Heart left ventricle (tissue), 16 donors: ENCODE measurements at regions of chr13 and their contacts with region 1.

Region 1: DNA sequence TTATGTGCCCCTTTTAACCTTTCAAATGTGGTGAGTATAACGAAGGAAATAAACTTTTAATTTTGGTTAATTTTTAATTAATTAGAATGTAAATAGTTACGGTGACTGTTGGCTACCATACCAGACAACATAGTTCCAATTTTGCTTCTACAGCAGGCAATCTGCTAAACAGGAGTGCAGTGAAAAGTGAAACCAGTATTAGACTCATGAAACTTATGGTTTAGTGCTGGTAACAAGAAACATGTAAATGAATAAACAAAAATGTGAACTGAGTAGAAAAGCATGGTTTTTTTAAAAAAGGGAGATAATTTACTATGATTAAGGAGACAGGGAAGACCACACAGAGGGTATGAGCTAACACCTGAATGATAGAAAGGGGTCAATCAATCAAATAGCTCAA is 478.4 kb downstream of the PCDH9 start:
- DNase-seq: no peak
- ATAC-seq: no peak
- H3K4me3 ChIP-seq: peak overlapping the region in 2 of 12 donors; percentile 4 to 15
- H3K27ac ChIP-seq: no peak overlapping the region
- H3K4me1 ChIP-seq: no peaks in the 10 kb centered on the region
- H3K27me3 ChIP-seq: no peaks in the 10 kb centered on the region
- CTCF ChIP-seq: no peak
- POLR2A ChIP-seq: no peak

Region 2: DNA sequence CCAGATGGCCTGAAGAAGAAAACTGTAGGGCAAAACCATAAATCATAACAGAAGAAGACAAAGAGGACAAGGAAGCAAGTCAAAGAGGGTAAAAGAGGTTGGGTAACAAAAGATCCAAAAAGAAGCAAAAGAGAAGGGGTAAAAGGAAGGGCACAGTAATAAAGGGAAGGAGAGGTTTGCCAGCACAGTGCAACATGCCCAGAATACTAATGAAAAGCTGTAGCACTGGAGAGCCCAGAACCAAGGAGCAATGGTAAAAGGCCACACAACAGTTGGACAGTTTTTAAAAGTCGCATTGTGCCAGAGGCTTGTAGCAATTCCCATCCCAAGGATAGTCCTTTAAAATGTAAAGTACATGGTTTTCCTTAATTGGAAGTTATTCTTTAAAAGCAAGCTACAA is 28.1 kb before region 1 on chr13:
- intact Hi-C with region 1: loop called in 1 of 10 experiments (anchors 2 kb)
- DNase-seq: no peak
- ATAC-seq: no peak
- H3K4me3 ChIP-seq: no peak overlapping the region
- H3K27ac ChIP-seq: no peak overlapping the region
- H3K4me1 ChIP-seq: no peaks in the 10 kb centered on the region
- H3K27me3 ChIP-seq: no peaks in the 10 kb centered on the region
- CTCF ChIP-seq: no peak
- POLR2A ChIP-seq: no peak